ENCODE measurements at regions of chr6 and their contacts with region 1.

Region 1: DNA sequence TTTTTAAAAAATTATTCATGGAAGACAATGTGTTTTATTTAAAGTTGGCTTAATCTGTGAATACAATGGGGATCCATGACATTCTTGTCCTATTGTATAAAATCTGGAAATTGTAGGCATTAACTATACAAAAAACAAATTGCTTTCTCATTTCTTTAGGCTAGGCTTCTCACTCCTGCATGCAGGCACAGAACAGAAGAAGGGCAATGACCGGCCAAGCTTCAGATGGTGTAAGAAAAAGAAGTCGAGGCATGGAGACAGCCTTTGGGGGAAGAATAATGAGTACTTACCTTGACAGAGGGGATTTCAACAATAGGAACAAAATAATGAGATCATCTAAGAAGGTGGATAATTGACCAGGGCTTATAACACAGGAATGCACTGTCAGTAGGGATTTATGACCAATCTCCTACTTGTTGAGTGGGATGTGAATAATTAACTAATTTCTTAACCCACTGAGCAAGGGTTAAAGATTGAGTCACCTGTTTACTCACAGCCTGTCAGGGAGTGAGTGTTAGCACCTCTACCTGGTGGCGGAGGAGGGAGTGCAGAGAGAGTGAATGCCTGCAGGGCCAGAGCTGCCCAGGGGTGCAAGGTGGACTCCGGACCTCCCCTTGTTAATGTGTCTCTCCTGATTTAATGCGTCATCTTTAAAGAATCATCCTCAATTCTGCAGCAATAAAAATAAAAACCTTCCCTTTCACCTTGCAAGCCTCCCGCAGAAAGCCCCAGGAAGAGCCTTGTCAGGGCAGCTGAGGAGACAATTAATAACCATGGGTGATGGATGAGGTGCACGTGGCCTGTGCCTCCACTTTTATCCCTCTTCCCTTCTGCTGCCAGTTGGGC is 3.9 kb downstream of the SLC22A2 start:
- DNase-seq: peak; percentile 86
- H3K4me3 Mint-ChIP-seq: peak overlapping the region; percentile 34
- H3K27ac Mint-ChIP-seq: peak overlapping the region; percentile 87
- H3K4me1 Mint-ChIP-seq: peaks cover 34% of the 10 kb centered on the region
- H3K27me3 Mint-ChIP-seq: no peaks in the 10 kb centered on the region
- CTCF ChIP-seq: no peak

Region 2: DNA sequence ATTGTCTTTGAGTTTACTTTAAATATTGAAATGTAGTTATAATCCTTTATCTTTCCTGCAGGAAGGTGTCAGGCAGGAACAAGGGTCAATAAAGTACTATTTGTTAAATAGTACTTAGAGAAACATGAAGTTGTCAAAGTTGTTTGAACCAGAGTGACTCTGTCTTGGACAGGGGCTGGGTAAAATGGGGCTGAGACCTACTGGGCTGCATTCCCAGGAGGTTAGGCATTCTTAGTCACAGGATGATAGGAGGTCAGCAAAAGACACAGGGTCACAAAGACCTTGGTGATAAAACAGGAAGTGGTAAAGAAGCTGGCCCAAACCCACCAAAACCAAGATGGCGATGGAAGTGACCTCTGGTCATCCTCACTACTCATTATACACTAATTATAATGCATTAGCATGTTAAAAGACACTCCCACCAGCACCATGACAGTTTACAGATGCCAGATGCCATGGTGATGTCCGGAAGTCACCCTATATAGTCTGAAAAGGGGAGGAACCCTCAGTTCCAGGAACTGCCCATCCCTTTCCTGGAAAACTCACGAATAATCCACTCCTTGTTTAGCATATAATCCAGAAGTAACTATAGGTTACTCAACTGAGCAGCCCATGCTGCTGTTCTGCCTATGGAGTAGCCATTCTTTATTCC is 15.8 kb before region 1 on chr6:
- CTCF ChIA-PET with region 1: interaction called, 3 read pairs
- intact Hi-C with region 1: loop called (anchors 2 kb)
- DNase-seq: no peak
- H3K4me3 Mint-ChIP-seq: no peak overlapping the region
- H3K27ac Mint-ChIP-seq: peak overlapping the region; percentile 91
- H3K4me1 Mint-ChIP-seq: peaks cover 34% of the 10 kb centered on the region
- H3K27me3 Mint-ChIP-seq: no peaks in the 10 kb centered on the region
- CTCF ChIP-seq: no peak

Region 3: GRCh38 chr6:160297310-160297709 is 42.6 kb after region 1 on chr6:
- CTCF ChIA-PET with region 1: no interaction called
- intact Hi-C with region 1: loop called (anchors 2 kb)
- DNase-seq: peak; percentile 59
- H3K4me3 Mint-ChIP-seq: no peak overlapping the region
- H3K27ac Mint-ChIP-seq: no peak overlapping the region
- H3K4me1 Mint-ChIP-seq: peaks cover 44% of the 10 kb centered on the region
- H3K27me3 Mint-ChIP-seq: no peaks in the 10 kb centered on the region
- CTCF ChIP-seq: peak; percentile 51